B cell (primary cell): ENCODE measurements at regions of chr1 and their contacts with region 1.

Region 1: DNA sequence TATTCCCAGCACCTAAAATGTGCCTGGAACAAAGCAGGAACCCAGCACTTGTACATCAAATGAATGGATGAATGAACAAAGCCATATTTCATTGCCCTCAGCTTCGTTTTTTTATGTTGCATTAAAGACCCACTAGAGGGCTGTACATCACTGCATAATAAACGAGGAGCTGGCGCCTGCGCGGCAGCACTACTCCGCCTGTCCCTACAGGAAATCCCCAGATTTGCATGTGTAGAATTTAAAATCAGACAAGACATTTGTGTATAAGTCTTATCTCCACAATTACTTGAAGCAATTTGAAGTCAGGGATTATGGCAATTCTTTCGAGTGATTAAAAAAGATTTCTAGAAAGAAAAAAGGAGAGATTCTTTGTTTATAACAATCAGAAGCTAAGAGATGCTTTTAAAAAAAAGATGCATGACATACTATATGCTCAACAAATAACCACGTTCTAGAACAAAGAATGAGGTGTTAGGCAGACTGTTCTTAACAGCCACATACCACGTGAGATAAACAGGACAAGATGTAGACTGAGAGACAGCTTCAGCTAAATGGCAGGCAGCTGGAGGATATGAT is 5.4 kb upstream of the NEK2 start:
- DNase-seq: peak; percentile 89
- ATAC-seq: peak; percentile 90
- H3K4me3 ChIP-seq: no peak overlapping the region
- H3K4me3 Mint-ChIP-seq: peak overlapping the region; percentile 44
- H3K27ac ChIP-seq: peak overlapping the region; percentile 70 to 81
- H3K27ac Mint-ChIP-seq: peak overlapping the region; percentile 87
- H3K4me1 ChIP-seq: peaks cover 24 to 35% of the 10 kb centered on the region in 2 donors
- H3K4me1 Mint-ChIP-seq: peaks cover 52% of the 10 kb centered on the region
- H3K27me3 ChIP-seq: no peaks in the 10 kb centered on the region
- H3K27me3 Mint-ChIP-seq: no peaks in the 10 kb centered on the region
- CTCF ChIP-seq: peak; percentile 86

Region 2: GRCh38 chr1:211625040-211625439 is 55.8 kb before region 1 on chr1:
- CTCF ChIA-PET with region 1: no interaction called
- POLR2A ChIA-PET with region 1: no interaction called
- intact Hi-C with region 1: no loop called
- DNase-seq: peak; percentile 55
- ATAC-seq: peak; percentile 69
- H3K4me3 ChIP-seq: no peak overlapping the region
- H3K4me3 Mint-ChIP-seq: no peak overlapping the region
- H3K27ac ChIP-seq: no peak overlapping the region
- H3K27ac Mint-ChIP-seq: no peak overlapping the region
- H3K4me1 ChIP-seq: no peaks in the 10 kb centered on the region
- H3K4me1 Mint-ChIP-seq: no peaks in the 10 kb centered on the region
- H3K27me3 ChIP-seq: no peaks in the 10 kb centered on the region
- H3K27me3 Mint-ChIP-seq: peaks cover 14% of the 10 kb centered on the region
- CTCF ChIP-seq: peak; percentile 32

Region 3: GRCh38 chr1:211830330-211831142 is 149.7 kb after region 1 on chr1 and contains the start of gene LPGAT1:
- CTCF ChIA-PET with region 1: interaction called, 11 read pairs
- POLR2A ChIA-PET with region 1: no interaction called
- intact Hi-C with region 1: loop called (anchors 1 kb)
- DNase-seq: peak; percentile 86
- ATAC-seq: peak; percentile 85
- H3K4me3 ChIP-seq: peak within 1 kb of the TSS; percentile 48 to 85 (median 72)
- H3K4me3 Mint-ChIP-seq: peak within 1 kb of the TSS; percentile 94
- H3K27ac ChIP-seq: peak within 1 kb of the TSS; percentile 39 to 80
- H3K27ac Mint-ChIP-seq: peak within 1 kb of the TSS; percentile 91
- H3K4me1 ChIP-seq: peaks cover 44 to 49% of the 10 kb centered on the region in 2 donors
- H3K4me1 Mint-ChIP-seq: peaks cover 58% of the 10 kb centered on the region
- H3K27me3 ChIP-seq: no peaks in the 10 kb centered on the region
- H3K27me3 Mint-ChIP-seq: no peaks in the 10 kb centered on the region
- CTCF ChIP-seq: peak; percentile 76
- total RNA-seq, gene LPGAT1: 60.1 and 63.8 TPM in 2 replicates

Region 4: DNA sequence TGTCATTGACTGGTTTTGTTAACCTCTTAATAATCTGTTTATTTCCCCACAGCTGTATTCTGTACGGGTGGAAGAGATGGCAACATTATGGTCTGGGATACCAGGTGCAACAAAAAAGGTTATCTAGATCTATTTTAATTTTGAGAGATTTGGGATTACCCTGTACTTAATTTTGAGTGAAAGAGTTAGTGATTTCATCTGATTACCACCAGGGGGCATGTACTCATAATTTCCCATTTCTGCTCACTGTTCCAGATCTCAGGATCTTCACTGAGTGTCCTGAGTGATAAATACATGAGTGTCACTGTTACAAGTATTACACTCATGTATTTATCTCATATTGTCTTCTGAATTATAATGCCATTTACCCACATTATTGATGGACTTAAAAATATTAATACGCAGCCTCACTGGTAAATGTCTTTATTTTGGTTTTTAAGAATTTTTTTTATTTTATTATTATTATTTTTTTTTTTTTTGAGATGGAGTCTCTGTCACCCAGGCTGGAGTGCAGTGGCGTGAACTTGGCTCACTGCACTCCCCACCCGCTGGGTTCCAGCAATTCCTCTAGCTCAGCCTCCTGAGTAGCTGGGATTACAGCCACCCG is 382.1 kb after region 1 on chr1:
- CTCF ChIA-PET with region 1: interaction called, 23 read pairs
- POLR2A ChIA-PET with region 1: no interaction called
- intact Hi-C with region 1: loop called (anchors 2 kb)
- DNase-seq: peak; percentile 56
- ATAC-seq: no peak
- H3K4me3 ChIP-seq: no peak overlapping the region
- H3K4me3 Mint-ChIP-seq: no peak overlapping the region
- H3K27ac ChIP-seq: no peak overlapping the region
- H3K27ac Mint-ChIP-seq: no peak overlapping the region
- H3K4me1 ChIP-seq: no peaks in the 10 kb centered on the region
- H3K4me1 Mint-ChIP-seq: no peaks in the 10 kb centered on the region
- H3K27me3 ChIP-seq: no peaks in the 10 kb centered on the region
- H3K27me3 Mint-ChIP-seq: no peaks in the 10 kb centered on the region
- CTCF ChIP-seq: peak; percentile 95

Region 5: DNA sequence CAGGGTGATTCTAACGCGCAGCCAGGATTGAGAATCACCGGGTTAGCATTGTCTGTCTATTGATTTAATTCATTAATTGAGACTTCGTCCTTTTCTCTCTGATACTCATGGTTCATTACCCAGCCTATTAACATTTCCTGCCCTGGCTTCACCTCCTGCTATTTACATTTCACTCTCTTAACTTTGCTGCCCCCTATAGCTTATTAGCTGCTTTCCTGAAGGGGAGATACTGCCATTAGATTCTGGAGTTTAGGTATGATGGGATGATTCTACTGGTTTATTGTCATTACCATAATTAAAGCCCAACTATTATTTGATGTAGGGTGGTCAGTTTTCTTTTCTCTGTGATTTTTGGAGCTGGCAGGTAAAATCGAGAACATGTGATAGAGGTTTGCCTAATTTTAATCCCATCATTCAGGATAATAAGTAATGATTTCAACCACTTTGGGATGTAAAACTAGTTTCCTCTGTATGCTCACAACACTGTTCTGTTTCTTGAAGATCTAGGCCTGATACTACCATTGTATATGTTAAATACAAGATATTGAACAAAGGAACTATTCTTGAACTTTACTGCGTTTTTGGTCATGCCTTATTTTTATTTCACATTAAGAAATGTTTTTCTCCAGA is 610.8 kb after region 1 on chr1:
- CTCF ChIA-PET with region 1: interaction called, 14 read pairs
- POLR2A ChIA-PET with region 1: no interaction called
- intact Hi-C with region 1: loop called (anchors 2 kb)
- DNase-seq: peak; percentile 78
- ATAC-seq: peak; percentile 87
- H3K4me3 ChIP-seq: no peak overlapping the region
- H3K4me3 Mint-ChIP-seq: peak overlapping the region; percentile 21
- H3K27ac ChIP-seq: no peak overlapping the region
- H3K27ac Mint-ChIP-seq: peak overlapping the region; percentile 46
- H3K4me1 ChIP-seq: peaks cover 29 to 61% of the 10 kb centered on the region in 2 donors
- H3K4me1 Mint-ChIP-seq: peaks cover 77% of the 10 kb centered on the region
- H3K27me3 ChIP-seq: no peaks in the 10 kb centered on the region
- H3K27me3 Mint-ChIP-seq: no peaks in the 10 kb centered on the region
- CTCF ChIP-seq: peak; percentile 82